ENCODE measurements at regions of chr12 and their contacts with region 1.

Region 1: GRCh38 chr12:66269757-66270383 is 32.4 kb upstream of the HELB start:
- DNase-seq: peak in 3 of 10 donors; percentile 4 to 79 (median 12)

Region 2: GRCh38 chr12:66409195-66409871 is 139.5 kb after region 1 on chr12:
- intact Hi-C with region 1: loop called (anchors 5 kb)
- DNase-seq: no peak

Region 3: DNA sequence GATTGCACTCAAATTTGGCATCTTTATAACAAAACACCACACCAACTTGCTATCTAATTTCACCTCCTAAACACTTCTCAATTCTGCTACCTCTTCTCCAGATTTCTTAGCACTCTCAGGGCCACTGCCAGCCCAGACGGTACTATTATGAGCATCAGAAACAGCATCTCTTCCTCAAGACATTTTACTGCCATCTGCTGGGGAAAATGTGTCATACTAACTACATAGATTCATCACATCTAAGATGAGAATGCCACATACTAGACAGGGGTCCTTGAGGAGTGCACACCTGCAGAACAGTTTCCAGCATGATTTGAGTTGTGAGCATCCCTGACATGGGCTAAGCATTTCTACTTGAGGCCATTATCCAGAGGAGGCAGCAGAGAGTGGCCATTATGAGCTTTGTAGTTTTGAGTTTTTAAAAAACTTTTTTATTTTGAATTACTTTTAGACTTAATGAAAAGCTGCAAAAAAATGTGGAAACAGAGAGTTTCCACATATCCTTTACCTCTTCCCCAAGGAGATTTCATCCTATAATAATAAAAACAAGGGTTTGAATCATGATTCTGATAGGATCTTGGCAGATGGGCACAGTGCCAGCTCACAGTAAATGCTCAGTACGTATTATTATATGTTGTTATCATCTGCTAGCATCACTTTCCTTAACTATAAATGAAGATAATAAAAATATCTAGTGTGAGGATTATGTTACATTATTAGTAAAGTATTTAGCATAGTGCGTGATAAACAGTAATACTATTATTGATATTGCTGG is 424.2 kb after region 1 on chr12:
- intact Hi-C with region 1: loop called (anchors 5 kb)
- DNase-seq: peak in 4 of 10 donors; percentile 11 to 68 (median 39)